ENCODE measurements at regions of chr2 and their contacts with region 1.

Region 1: DNA sequence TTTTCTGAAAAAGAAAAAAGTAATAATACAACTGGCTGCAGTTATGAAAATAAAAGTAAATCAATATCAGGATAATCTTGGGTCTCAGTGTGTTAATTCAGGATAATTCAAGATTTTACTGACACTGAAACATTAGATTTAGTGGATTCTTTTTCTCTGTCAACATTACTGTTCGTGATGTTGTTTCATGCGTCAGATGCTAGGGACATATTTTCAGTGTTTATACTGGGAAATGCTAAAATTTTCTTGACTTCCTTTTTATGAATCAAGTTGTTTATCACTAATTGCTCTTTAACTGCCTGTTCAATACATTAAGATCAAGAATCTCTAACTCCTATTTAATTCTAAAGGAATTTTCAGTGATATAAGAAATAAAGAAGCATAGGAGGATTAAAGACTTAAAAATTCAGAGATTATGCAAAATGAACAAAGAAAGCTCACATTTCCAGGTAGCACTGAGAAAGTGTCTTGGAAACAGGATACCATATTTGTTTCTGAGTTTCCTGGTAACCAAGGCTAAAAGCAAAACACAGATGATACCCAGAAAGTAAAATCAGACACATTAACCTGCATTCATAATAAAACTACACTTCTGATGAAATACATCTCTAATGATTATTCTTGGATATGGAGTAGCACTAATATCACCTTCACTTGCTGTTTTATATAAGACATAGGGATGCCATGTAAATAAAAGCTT is 174.0 kb downstream of the ARL4C start:
- DNase-seq: peak in 3 of 14 experiments; percentile 50 to 67 (median 60)
- ATAC-seq: peak; percentile 83
- H3K4me3 ChIP-seq: no peak overlapping the region
- H3K4me3 Mint-ChIP-seq: peak overlapping the region; percentile 55
- H3K27ac ChIP-seq: peak overlapping the region in 1 of 2 donors; percentile 7
- H3K27ac Mint-ChIP-seq: peak overlapping the region; percentile 85
- H3K4me1 ChIP-seq: peaks cover 10% of the 10 kb centered on the region
- H3K4me1 Mint-ChIP-seq: peaks cover 41% of the 10 kb centered on the region
- H3K27me3 ChIP-seq: no peaks in the 10 kb centered on the region
- H3K27me3 Mint-ChIP-seq: no peaks in the 10 kb centered on the region
- CTCF ChIP-seq: no peak

Region 2: GRCh38 chr2:234308813-234309195 is 14.1 kb before region 1 on chr2:
- CTCF ChIA-PET with region 1: no interaction called
- POLR2A ChIA-PET with region 1: no interaction called
- intact Hi-C with region 1: loop called in 1 of 2 experiments (anchors 2 kb)
- DNase-seq: peak; percentile 39 to 94 (median 56)
- ATAC-seq: peak; percentile 86
- H3K4me3 ChIP-seq: no peak overlapping the region
- H3K4me3 Mint-ChIP-seq: peak overlapping the region; percentile 68
- H3K27ac ChIP-seq: peak overlapping the region; percentile 50 to 56
- H3K27ac Mint-ChIP-seq: peak overlapping the region; percentile 88
- H3K4me1 ChIP-seq: peaks cover 25% of the 10 kb centered on the region
- H3K4me1 Mint-ChIP-seq: peaks cover 62% of the 10 kb centered on the region
- H3K27me3 ChIP-seq: no peaks in the 10 kb centered on the region
- H3K27me3 Mint-ChIP-seq: no peaks in the 10 kb centered on the region
- CTCF ChIP-seq: no peak

Region 3: GRCh38 chr2:234363011-234363487 is 40.1 kb after region 1 on chr2:
- CTCF ChIA-PET with region 1: no interaction called
- POLR2A ChIA-PET with region 1: no interaction called
- intact Hi-C with region 1: no loop called
- DNase-seq: no peak
- ATAC-seq: no peak
- H3K4me3 ChIP-seq: no peak overlapping the region
- H3K4me3 Mint-ChIP-seq: no peak overlapping the region
- H3K27ac ChIP-seq: no peak overlapping the region
- H3K27ac Mint-ChIP-seq: no peak overlapping the region
- H3K4me1 ChIP-seq: peaks cover 15% of the 10 kb centered on the region
- H3K4me1 Mint-ChIP-seq: peaks cover 56% of the 10 kb centered on the region
- H3K27me3 ChIP-seq: no peaks in the 10 kb centered on the region
- H3K27me3 Mint-ChIP-seq: no peaks in the 10 kb centered on the region
- CTCF ChIP-seq: no peak

Measured in CD4-positive, alpha-beta T cell (primary cell).